OCI-LY7 (cell line): ENCODE measurements at regions of chr4 and their contacts with region 1.

Region 1: DNA sequence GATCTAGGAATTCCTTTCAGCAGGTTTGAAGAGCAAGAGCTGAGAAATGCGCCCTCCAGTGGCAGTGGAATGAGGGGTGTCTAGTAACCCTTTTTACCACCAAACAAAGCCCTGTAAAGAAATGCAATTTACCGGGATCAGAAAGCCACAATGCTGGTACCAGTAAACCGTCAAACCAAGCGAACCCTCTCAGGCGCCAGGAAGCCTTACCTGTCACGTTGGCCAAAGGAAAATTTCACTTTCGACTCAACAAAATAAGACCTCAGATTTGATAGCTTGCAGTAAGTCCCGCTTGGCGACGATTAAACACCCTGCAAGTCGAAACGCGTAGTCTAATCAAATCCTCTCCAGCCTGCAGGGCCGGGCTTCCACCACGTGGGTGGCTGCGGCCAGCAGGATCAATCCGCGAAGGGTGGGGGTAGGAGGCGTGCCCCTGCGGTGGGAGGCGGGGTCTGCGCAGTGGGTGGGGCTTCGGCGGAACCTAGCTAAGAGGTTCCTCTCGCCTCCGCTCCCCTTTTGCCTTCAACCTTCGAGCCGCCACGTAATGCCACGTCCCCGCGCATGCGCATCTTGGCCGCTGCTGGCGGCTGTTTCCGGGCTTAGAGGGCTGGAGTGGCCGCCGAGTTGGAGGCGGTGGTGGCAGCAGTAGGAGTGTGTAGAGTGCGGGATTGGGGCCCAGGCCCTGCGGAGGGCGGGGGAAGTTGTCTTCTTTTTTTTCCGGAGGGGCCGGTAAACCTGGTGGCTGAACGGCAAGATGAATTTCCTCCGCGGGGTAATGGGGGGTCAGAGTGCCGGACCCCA is at the start of gene USO1:
- DNase-seq: peak; percentile 98
- H3K4me3 ChIP-seq: peak within 1 kb of the TSS; percentile 84
- H3K27ac ChIP-seq: peak within 1 kb of the TSS; percentile 76
- H3K4me1 ChIP-seq: peaks cover 38% of the 10 kb centered on the region
- CTCF ChIP-seq: peak; percentile 95
- total RNA-seq, gene USO1: 38.0 and 40.5 TPM in 2 replicates

Region 2: GRCh38 chr4:75673027-75673958 is 51.0 kb before region 1 on chr4 and contains the start of gene G3BP2:
- CTCF ChIA-PET with region 1: interaction called, 6 read pairs
- POLR2A ChIA-PET with region 1: interaction called, 19 read pairs
- intact Hi-C with region 1: loop called (anchors 1 kb)
- DNase-seq: peak; percentile 99
- H3K4me3 ChIP-seq: peak within 1 kb of the TSS; percentile 95
- H3K27ac ChIP-seq: peak within 1 kb of the TSS; percentile 87
- H3K4me1 ChIP-seq: peaks cover 41% of the 10 kb centered on the region
- CTCF ChIP-seq: no peak
- total RNA-seq, gene G3BP2: 55.9 and 56.7 TPM in 2 replicates

Region 3: GRCh38 chr4:75741027-75741426 is 16.8 kb after region 1 on chr4:
- CTCF ChIA-PET with region 1: no interaction called
- POLR2A ChIA-PET with region 1: interaction called, 26 read pairs
- intact Hi-C with region 1: no loop called
- DNase-seq: no peak
- H3K4me3 ChIP-seq: no peak overlapping the region
- H3K27ac ChIP-seq: no peak overlapping the region
- H3K4me1 ChIP-seq: peaks cover 9% of the 10 kb centered on the region
- CTCF ChIP-seq: no peak

Region 4: DNA sequence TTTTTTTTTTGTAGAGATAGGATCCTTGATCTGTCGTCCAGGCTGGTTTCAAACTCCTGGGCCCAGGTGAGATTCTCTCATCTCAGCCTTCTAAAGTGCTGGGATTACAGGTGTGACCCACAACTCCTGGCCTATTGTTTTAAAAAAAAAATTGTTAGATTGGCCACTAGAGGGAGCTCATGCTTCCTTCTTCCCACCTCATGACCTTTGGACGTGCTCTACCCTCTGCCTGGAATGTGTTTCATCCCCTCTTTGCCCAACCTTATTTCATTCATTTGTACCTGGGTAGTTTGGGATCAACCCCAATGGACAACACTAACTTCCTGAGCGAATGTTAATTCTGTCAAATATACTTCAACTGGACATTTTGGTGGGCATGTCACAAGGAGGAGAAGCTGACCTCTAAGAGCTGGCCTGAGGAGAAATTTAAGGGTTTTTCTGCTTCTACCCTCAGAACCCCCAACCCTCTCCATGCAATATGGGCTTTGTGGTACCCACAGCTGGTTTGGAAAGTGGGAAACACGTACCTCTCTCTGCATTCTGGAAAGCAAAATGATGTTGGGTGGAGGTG is 171.6 kb after region 1 on chr4:
- CTCF ChIA-PET with region 1: no interaction called
- POLR2A ChIA-PET with region 1: no interaction called
- intact Hi-C with region 1: no loop called
- DNase-seq: peak; percentile 51
- H3K4me3 ChIP-seq: no peak overlapping the region
- H3K27ac ChIP-seq: no peak overlapping the region
- H3K4me1 ChIP-seq: no peaks in the 10 kb centered on the region
- CTCF ChIP-seq: peak; percentile 84